ENCODE measurements at regions of chr12 and their contacts with region 1.

Region 1: GRCh38 chr12:49776413-49776812 is 35.1 kb downstream of the TMBIM6 start:
- DNase-seq: peak; percentile 37
- H3K4me3 Mint-ChIP-seq: no peak overlapping the region
- H3K27ac Mint-ChIP-seq: no peak overlapping the region
- H3K4me1 Mint-ChIP-seq: peaks cover 19% of the 10 kb centered on the region
- H3K27me3 Mint-ChIP-seq: peaks cover 18% of the 10 kb centered on the region

Region 2: DNA sequence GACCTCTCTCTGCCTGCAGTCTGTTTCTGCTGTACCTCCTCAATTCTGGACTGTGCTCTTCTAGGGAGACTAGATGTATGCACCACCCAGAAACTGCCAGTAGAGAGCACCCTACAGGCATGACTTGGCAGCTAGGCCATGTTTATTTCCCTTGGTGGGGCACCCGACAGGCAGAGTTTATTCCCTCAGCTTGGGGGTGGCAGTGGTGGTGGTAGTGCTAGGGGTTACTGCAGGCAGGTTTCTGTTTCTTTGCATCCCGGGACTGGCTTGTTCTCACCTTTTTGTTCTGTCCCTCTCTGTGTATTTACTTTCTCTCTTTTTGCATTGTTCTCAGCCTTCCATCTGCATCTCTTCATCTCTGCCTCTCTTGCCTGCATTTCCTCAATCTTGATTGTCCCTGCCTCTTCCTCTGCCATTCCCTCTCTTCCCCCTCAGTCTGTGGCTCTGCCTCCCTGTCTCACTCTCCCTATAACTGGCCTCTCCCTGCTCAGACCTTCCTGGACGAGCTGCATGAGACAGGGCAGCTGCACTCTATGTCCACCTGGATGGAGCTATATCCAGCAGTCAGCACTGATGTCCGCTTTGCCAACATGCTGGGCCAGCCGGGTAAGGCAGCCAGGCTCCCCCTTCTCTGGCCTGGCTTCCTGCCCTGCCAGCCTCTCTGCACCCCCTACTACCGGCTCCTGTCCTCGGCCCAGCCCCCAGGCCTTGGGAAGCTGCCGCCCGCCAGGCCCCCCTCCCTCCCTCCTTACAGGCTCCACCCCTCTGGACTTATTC is 139.2 kb before region 1 on chr12:
- intact Hi-C with region 1: loop called (anchors 1 kb)
- DNase-seq: peak; percentile 54
- H3K4me3 Mint-ChIP-seq: no peak overlapping the region
- H3K27ac Mint-ChIP-seq: peak overlapping the region; percentile 24
- H3K4me1 Mint-ChIP-seq: peaks cover 11% of the 10 kb centered on the region
- H3K27me3 Mint-ChIP-seq: no peaks in the 10 kb centered on the region

Region 3: DNA sequence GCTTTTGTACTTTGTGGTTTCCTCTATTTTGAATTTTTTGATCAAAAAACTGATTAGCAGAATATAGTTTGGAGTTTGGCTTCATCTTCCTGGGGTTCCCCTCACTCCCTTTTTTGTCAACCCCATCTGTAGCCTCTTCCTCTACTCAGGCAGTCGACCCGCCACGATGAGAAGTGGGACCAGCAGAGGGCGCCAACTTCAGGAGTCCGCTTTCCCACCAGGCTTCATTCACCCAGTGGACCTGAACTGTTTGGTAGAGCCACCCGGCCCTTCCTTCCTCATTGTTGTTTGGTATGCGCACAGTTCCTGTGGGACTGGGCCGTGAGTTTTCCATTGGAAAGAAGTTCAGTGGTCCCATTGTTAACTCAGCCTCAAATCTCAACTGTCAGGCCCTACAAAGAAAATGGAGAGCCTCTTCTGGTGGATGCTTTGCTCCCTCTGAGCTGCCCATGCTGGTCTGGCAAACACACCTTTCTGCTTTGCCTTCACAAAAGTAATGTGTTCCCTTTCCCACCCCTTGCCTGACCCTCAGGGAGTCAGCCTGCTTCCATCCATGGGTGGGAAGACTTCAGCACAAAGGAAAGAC is 13.3 kb before region 1 on chr12:
- intact Hi-C with region 1: loop called (anchors 1 kb)
- DNase-seq: peak; percentile 61
- H3K4me3 Mint-ChIP-seq: peak overlapping the region; percentile 61
- H3K27ac Mint-ChIP-seq: peak overlapping the region; percentile 75
- H3K4me1 Mint-ChIP-seq: peaks cover 49% of the 10 kb centered on the region
- H3K27me3 Mint-ChIP-seq: peaks cover 3% of the 10 kb centered on the region

Region 4: DNA sequence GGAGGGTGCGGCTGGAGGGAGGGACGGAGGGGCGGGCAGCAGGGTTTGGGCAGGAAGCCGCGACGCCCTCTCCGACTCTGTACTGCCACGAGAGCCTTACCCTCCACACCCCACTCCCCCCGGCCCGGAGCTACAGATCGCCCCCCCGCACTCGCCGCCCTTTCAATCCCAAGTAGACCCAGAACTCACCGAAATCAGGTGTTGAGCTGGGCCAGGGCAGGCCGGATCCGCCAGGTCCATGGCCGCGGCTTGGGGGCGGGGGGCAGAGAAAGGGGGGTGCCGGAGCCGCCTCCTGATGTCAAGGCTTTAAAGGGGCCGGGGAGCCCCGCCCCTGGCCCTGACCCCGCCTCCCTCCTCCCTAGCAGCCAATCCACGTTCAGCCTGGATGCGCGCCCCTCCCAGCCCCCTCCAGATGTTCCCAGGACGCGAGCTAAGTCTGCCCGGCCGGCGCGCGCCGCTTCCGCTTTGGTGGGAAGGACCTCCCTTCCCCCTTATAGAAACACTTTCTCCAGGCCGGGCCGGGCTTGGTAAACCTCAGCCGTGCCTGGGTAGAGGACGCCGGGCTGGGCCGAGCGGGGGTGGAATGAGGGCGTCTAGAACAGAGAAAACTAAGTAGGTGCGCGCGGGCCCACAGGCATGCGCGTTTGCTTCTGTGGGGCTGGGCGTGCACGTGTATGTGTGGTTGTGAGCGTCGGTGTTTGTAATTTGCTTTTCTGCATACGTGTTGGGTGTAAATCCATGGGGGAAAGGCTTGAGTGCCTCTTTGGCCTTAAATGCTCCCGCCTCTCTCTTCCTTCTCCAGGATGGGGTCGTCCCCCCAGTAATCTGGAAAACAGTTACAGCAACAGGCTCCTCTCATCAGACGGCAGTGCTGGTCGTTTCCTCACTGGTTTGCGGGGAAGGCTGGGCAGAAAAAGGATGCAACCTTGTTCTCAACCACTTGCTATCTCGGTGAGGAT is 52.0 kb after region 1 on chr12 and contains the start of gene NCKAP5L:
- intact Hi-C with region 1: loop called (anchors 2 kb)
- DNase-seq: peak; percentile 86
- H3K4me3 Mint-ChIP-seq: peak within 1 kb of the TSS; percentile 96
- H3K27ac Mint-ChIP-seq: peak within 1 kb of the TSS; percentile 91
- H3K4me1 Mint-ChIP-seq: peaks cover 28% of the 10 kb centered on the region
- H3K27me3 Mint-ChIP-seq: peaks cover 24% of the 10 kb centered on the region
- total RNA-seq, gene NCKAP5L: 3.8 TPM in 2 replicates

Region 5: GRCh38 chr12:49866859-49867579 is 90.6 kb after region 1 on chr12:
- intact Hi-C with region 1: loop called (anchors 1 kb)
- DNase-seq: peak; percentile 65
- H3K4me3 Mint-ChIP-seq: no peak overlapping the region
- H3K27ac Mint-ChIP-seq: no peak overlapping the region
- H3K4me1 Mint-ChIP-seq: no peaks in the 10 kb centered on the region
- H3K27me3 Mint-ChIP-seq: peaks cover 7% of the 10 kb centered on the region